CD8-positive, alpha-beta T cell (primary cell): ENCODE measurements at regions of chr1 and their contacts with region 1.

Region 1: DNA sequence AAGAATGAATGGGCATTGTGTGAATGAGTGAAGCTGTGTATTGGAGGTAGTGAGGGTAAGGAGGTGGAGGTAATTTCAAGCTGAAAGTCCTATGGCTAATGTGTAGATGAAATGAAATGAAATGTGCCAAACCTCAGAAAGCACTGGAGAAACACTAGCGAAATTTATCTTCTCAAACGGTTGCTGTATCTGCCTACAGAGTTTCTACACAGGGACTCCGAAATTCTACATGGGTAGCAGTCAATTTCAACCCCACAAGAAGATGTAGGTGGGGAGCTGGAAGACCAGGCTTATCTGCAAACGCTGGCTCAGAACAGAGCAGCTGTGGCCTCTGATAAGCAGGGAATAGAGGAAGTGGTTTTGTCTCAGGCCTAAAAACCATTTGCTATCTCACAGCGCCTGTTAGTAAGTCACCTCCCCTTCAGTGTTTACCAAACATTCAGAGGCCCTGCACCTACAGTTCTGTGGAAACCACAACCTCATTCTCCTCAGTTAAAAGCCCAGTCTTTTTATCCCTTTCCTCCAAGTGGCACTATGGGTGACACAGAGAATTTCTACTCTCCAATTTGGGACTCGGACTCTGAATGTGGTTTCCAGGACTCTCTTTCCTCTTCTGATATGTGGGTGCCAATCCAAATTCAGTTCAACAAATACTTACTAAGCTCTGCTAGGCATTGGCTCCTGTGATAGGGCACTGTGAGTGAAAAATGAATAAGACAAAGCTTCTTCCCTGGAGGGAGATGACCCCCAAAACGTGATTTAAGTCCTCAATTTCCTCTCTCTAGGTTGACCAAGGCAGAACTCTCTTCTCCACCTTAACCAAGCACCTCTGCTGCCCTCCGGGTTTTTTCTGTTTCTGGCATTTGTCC is 17.2 kb upstream of the SLAMF6 start:
- DNase-seq: peak; percentile 19 to 86 (median 60)
- ATAC-seq: peak; percentile 91
- H3K4me3 ChIP-seq: peak overlapping the region in 1 of 2 experiments; percentile 19
- H3K4me3 Mint-ChIP-seq: peak overlapping the region; percentile 20
- H3K27ac ChIP-seq: peak overlapping the region; percentile 36 to 76
- H3K27ac Mint-ChIP-seq: peak overlapping the region; percentile 95
- H3K4me1 ChIP-seq: peaks cover 55% of the 10 kb centered on the region
- H3K4me1 Mint-ChIP-seq: peaks cover 58% of the 10 kb centered on the region
- H3K27me3 ChIP-seq: no peaks in the 10 kb centered on the region
- H3K27me3 Mint-ChIP-seq: no peaks in the 10 kb centered on the region
- CTCF ChIP-seq: no peak

Region 2: DNA sequence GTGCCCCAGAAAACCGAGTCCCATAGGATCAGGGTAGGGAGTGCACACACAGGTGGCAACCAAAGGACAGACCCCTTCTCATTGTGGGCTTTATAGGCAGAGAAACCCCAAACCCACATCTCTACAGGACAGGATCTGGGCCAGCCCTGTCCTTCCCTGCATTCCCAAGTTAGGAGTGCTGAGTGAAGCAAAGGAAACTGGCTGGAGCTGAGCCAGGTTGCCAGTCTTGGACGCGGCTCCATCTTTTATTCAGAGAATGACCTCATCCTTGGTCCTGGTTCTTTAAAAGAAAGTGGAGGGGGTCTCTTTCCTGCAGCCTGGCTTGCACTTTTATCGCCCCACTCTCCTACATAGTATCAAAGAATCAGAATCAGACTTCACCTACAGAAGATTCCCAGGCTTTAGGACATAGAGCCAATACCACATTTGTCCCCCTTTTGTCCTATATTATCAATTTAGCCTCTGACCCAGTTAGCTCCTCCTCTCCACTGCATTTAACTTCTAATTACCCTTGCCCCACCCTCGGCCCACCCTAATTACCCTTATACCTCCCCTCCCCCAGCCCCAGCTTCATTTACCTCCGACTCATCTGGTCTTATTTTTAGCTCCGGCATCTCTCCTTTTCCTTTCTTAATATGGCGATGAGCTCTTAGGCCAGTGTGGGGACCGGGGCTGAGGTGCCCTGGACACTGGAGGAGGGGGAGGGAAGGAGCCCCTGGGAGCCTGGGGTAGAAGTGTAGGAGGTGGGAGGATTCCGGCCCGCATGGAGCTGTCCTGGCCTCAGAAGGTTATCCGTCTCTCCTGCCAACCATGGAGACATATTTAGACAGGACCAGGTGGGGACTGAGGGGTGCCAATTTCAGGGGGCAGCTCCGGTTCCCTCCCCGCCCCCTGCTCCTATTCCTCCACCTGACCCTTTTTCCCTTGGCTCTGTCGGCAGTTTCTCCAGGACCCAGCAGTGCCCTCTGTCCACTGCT is 350.3 kb before region 1 on chr1 and contains the start of gene CASQ1:
- CTCF ChIA-PET with region 1: no interaction called
- POLR2A ChIA-PET with region 1: no interaction called
- intact Hi-C with region 1: no loop called
- DNase-seq: no peak
- ATAC-seq: no peak
- H3K4me3 ChIP-seq: no peak within 1 kb of the TSS
- H3K4me3 Mint-ChIP-seq: no peak within 1 kb of the TSS
- H3K27ac ChIP-seq: no peak within 1 kb of the TSS
- H3K27ac Mint-ChIP-seq: no peak within 1 kb of the TSS
- H3K4me1 ChIP-seq: no peaks in the 10 kb centered on the region
- H3K4me1 Mint-ChIP-seq: no peaks in the 10 kb centered on the region
- H3K27me3 ChIP-seq: peaks cover 0 to 2% of the 10 kb centered on the region in 2 experiments
- H3K27me3 Mint-ChIP-seq: peaks cover 3% of the 10 kb centered on the region
- CTCF ChIP-seq: no peak
- total RNA-seq, gene CASQ1: not detected

Region 3: GRCh38 chr1:160342953-160343869 is 197.0 kb before region 1 on chr1 and contains the starts of genes COPA and NCSTN:
- CTCF ChIA-PET with region 1: no interaction called
- POLR2A ChIA-PET with region 1: no interaction called
- intact Hi-C with region 1: loop called in 1 of 2 experiments (anchors 10 kb)
- DNase-seq: peak; percentile 82 to 97 (median 89)
- ATAC-seq: peak; percentile 98
- H3K4me3 ChIP-seq: peak within 1 kb of the TSS; percentile 78 to 98
- H3K4me3 Mint-ChIP-seq: peak within 1 kb of the TSS; percentile 100
- H3K27ac ChIP-seq: peak within 1 kb of the TSS; percentile 88 to 97
- H3K27ac Mint-ChIP-seq: peak within 1 kb of the TSS; percentile 100
- H3K4me1 ChIP-seq: peaks cover 12% of the 10 kb centered on the region
- H3K4me1 Mint-ChIP-seq: peaks cover 72% of the 10 kb centered on the region
- H3K27me3 ChIP-seq: no peaks in the 10 kb centered on the region
- H3K27me3 Mint-ChIP-seq: no peaks in the 10 kb centered on the region
- CTCF ChIP-seq: no peak
- total RNA-seq, gene COPA: 116 to 126 TPM
- total RNA-seq, gene NCSTN: 55.6 to 58.4 TPM

Region 4: DNA sequence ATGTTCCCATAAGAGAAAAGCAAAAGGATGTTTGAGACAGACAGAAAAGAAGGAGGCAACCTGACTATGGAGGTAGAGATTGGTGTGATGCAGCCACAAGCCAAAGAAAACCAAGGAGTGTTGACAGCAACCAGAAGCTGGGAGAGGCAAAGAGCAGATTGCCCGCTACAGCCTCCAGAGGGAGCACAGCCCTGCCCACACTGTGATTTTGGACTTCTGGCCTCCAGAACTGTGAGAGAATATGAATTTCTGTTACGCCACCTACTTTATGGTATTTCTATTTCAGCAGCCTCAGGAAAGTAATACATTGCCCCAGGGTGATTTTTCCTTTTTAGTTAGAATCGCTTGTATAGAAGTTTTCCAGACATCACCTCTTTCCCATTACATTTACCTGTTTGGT is 45.6 kb before region 1 on chr1:
- CTCF ChIA-PET with region 1: interaction called, 5 read pairs
- POLR2A ChIA-PET with region 1: no interaction called
- intact Hi-C with region 1: loop called in 1 of 2 experiments (anchors 10 kb)
- DNase-seq: peak in 2 of 9 experiments; percentile 29 to 31
- ATAC-seq: no peak
- H3K4me3 ChIP-seq: no peak overlapping the region
- H3K4me3 Mint-ChIP-seq: no peak overlapping the region
- H3K27ac ChIP-seq: no peak overlapping the region
- H3K27ac Mint-ChIP-seq: no peak overlapping the region
- H3K4me1 ChIP-seq: no peaks in the 10 kb centered on the region
- H3K4me1 Mint-ChIP-seq: peaks cover 36% of the 10 kb centered on the region
- H3K27me3 ChIP-seq: no peaks in the 10 kb centered on the region
- H3K27me3 Mint-ChIP-seq: no peaks in the 10 kb centered on the region
- CTCF ChIP-seq: no peak

Region 5: DNA sequence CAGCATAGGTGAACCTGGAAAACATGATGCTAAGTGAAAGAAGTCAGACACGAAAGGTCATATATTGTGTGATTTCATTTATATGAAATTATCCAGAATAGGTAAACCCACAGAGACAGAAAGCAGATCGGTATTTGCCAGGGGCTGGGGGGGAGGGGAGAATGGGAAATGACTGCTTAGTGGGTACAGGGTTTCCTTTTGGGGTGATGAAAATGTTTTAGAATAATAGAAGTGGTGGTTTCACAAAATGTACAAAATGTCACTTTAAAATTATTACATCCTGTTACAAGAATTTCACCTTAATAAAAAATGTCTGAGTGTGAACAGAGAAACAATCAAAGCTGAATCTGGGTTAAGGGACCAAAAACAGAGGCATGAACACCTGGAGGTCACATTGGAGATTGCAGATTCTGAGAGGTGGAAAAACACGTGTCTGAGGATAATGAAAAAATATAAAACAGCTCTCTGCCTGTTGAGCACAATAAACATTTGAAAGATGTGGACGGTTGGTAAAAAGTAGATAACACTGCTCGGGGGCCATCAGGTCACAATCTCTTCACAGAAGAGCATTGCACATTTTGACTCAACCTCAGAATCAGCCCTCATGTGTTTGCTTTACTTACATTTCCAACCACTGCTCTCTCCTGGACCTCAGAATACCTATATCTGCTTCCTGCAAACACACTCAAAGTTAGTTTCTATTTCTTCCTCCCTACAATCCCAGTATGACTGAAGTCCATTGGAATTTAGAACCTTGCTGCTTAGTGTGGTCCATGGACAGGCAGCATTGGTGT is 20.4 kb before region 1 on chr1:
- CTCF ChIA-PET with region 1: interaction called, 10 read pairs
- POLR2A ChIA-PET with region 1: interaction called, 15 read pairs
- intact Hi-C with region 1: loop called in 1 of 2 experiments (anchors 2 kb)
- DNase-seq: peak in 3 of 9 experiments; percentile 28 to 73 (median 59)
- ATAC-seq: peak; percentile 60
- H3K4me3 ChIP-seq: peak overlapping the region; percentile 69 to 81
- H3K4me3 Mint-ChIP-seq: peak overlapping the region; percentile 91
- H3K27ac ChIP-seq: peak overlapping the region; percentile 65 to 74
- H3K27ac Mint-ChIP-seq: peak overlapping the region; percentile 95
- H3K4me1 ChIP-seq: peaks cover 62% of the 10 kb centered on the region
- H3K4me1 Mint-ChIP-seq: peaks cover 93% of the 10 kb centered on the region
- H3K27me3 ChIP-seq: no peaks in the 10 kb centered on the region
- H3K27me3 Mint-ChIP-seq: no peaks in the 10 kb centered on the region
- CTCF ChIP-seq: peak; percentile 58

Region 6: GRCh38 chr1:160567858-160568682 is 27.8 kb after region 1 on chr1:
- CTCF ChIA-PET with region 1: interaction called, 15 read pairs
- POLR2A ChIA-PET with region 1: interaction called, 3 read pairs
- intact Hi-C with region 1: no loop called
- DNase-seq: peak; percentile 35 to 87 (median 77)
- ATAC-seq: peak; percentile 95
- H3K4me3 ChIP-seq: peak overlapping the region in 1 of 2 experiments; percentile 9
- H3K4me3 Mint-ChIP-seq: peak overlapping the region; percentile 59
- H3K27ac ChIP-seq: peak overlapping the region; percentile 55 to 80
- H3K27ac Mint-ChIP-seq: peak overlapping the region; percentile 95
- H3K4me1 ChIP-seq: peaks cover 93% of the 10 kb centered on the region
- H3K4me1 Mint-ChIP-seq: peaks cover 95% of the 10 kb centered on the region
- H3K27me3 ChIP-seq: no peaks in the 10 kb centered on the region
- H3K27me3 Mint-ChIP-seq: no peaks in the 10 kb centered on the region
- CTCF ChIP-seq: no peak

Region 7: GRCh38 chr1:160580221-160580812 is 40.1 kb after region 1 on chr1:
- CTCF ChIA-PET with region 1: interaction called, 16 read pairs
- POLR2A ChIA-PET with region 1: interaction called, 3 read pairs
- intact Hi-C with region 1: loop called (anchors 1 to 5 kb)
- DNase-seq: peak in 1 of 9 experiments; percentile 27
- ATAC-seq: no peak
- H3K4me3 ChIP-seq: peak overlapping the region in 1 of 2 experiments; percentile 8
- H3K4me3 Mint-ChIP-seq: peak overlapping the region; percentile 44
- H3K27ac ChIP-seq: peak overlapping the region; percentile 24 to 70
- H3K27ac Mint-ChIP-seq: peak overlapping the region; percentile 84
- H3K4me1 ChIP-seq: peaks cover 58% of the 10 kb centered on the region
- H3K4me1 Mint-ChIP-seq: peaks cover 77% of the 10 kb centered on the region
- H3K27me3 ChIP-seq: no peaks in the 10 kb centered on the region
- H3K27me3 Mint-ChIP-seq: no peaks in the 10 kb centered on the region
- CTCF ChIP-seq: no peak